AG04450 (cell line): ENCODE measurements at regions of chr21 and their contacts with region 1.

Region 1: DNA sequence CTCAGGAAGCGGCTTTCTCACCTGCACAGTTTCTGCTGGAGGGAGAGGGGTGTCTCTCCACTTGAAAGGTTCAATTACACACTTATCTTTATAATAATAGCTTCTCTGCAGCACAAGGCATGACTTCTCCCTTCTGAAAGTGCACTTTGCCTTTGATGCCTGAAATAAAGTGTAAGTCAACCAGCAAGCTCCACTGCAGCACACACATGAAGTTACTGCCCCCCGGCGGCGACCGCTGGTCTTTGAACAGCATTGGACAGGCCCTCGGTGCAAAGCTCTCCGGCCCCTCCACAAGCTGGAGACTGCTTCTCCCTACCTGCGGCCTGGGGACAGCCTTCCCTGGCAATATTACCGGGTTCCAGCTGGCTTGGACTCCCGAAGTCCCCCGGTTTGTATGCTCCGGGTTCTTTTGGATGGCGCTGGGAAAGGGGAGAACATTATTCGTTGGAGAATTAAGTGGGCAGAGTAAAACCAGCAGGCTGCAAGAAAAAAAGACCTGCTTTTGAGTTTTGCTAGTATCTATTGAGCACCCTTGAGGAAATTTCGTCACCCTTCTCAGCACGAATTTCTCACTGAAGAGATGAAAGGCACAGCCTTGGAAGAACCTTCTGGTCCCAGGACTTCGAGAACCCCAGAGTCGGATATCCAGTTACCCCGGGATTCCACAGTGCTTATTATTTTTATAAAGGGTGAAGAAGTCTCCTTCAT is 11.8 kb downstream of the RCAN1 start:
- DNase-seq: peak; percentile 46
- H3K4me3 ChIP-seq: no peak overlapping the region
- H3K27ac ChIP-seq: no peak overlapping the region
- H3K27me3 ChIP-seq: no peaks in the 10 kb centered on the region
- CTCF ChIP-seq: peak; percentile 84

Region 2: GRCh38 chr21:34046917-34047316 is 556.2 kb before region 1 on chr21:
- CTCF ChIA-PET with region 1: no interaction called
- POLR2A ChIA-PET with region 1: no interaction called
- DNase-seq: no peak
- H3K4me3 ChIP-seq: no peak overlapping the region
- H3K27ac ChIP-seq: no peak overlapping the region
- H3K27me3 ChIP-seq: no peaks in the 10 kb centered on the region
- CTCF ChIP-seq: no peak

Region 3: DNA sequence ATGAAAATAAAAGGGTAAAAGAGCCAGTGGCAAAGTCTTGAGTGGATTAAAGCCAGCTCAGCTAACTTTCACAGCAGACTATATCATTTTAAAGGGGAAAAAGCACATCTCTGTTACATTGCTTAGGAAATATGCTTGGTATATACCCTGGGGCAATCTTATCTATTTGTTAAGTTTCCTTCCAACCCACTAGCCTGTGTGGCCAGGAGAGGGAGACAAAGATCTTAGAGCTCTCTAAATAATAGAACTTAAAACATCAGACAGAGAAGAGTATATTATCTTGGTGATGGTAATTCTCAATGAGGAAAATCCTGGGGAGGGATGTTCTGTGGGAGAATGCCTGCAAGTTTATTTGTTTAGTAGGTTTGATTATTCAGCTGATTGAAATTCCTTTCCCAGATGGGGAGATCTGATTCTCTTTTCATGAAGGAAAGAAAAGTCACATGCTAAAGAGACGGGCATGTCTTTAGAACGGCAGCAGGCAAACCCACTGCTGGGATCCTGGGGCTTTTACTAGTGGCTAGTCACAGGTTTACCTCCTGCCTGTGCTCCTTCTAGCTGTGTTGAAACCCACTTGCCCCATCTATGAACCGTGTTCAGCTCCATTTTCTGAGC is 235.7 kb before region 1 on chr21:
- CTCF ChIA-PET with region 1: interaction called, 23 read pairs
- POLR2A ChIA-PET with region 1: no interaction called
- DNase-seq: peak; percentile 55
- H3K4me3 ChIP-seq: no peak overlapping the region
- H3K27ac ChIP-seq: no peak overlapping the region
- H3K27me3 ChIP-seq: peaks cover 3% of the 10 kb centered on the region
- CTCF ChIP-seq: peak; percentile 90

Region 4: DNA sequence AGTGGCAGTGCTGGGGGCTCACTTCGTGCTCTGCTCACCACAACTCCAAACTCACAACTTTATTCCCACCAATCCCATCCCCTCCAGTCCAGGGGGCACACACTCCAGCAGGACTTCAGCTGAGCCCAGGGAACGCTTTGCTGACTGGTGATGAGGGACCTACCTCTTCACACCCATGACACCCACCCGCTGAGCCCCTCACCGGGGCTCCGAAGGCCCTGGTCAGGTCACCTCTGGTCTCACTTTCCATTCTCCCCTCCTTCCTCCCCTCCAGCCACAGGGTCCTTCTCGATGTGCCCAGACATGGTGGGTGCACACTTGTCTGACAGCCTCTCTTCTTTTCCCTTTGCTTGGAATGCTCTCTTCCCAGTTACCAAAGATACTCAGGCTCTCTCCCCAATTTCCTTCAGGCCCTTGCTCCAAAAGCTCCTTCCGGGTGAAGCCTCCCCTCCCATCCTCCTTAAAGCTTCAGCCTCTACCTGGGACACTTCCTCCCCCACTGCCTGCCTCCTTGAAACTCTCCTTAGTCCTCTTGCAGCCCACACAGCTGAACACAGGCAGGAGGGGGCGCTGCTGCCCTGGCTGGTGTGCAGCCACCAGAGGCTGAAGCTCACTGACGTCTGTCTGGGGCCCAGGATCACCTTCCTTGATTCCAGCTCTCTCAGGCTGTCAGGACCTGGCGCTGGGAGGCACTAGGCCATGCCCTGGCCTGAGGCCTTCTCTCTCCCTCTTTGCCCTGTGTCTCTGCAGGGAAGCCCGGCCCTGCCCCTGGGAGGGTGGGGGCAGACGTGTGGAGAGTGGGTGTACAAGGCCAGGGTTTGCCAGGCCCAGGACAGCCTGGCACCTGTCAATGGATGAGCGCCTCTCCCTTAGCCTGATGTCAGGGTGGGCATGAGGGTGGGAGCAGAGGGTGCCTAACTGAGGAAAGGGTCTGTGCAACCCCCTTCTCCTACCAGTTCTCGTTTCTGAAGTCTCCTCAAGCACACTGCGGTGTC is 92.7 kb before region 1 on chr21:
- CTCF ChIA-PET with region 1: interaction called, 102 read pairs
- POLR2A ChIA-PET with region 1: interaction called, 7 read pairs
- DNase-seq: no peak
- H3K4me3 ChIP-seq: no peak overlapping the region
- H3K27ac ChIP-seq: no peak overlapping the region
- H3K27me3 ChIP-seq: no peaks in the 10 kb centered on the region
- CTCF ChIP-seq: peak; percentile 87

Region 5: DNA sequence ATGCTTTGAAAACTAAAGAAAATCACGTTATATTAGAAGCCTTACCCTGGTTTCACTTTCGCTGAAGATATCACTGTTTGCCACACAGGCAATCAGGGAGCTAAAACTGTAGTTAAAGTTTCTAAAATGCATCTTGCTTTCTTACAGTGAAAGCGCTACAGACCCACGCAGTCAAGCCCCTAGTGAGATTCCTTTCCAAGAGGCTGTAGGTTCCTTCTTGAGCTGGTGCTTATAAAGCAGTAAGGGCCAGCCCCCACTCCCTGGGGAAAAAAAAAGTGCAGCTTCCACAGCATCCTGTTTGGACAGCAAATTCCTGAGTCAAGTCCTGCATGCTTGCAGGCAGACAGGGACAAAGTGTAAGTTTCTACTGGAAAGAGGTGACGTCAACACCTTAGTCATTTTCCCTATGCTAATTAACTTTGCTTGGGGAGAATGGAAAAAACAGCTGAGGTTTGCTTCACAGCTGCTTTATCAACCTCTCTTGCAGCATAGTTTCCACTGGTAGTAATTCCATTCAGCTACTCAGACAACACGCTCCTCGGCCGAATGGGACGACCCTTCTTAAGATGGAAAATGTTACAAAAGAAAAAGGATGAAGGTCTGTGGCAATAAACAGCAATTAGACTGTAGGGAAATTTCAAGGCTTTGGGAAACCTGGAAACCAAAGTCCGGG is 76.4 kb before region 1 on chr21:
- CTCF ChIA-PET with region 1: interaction called, 23 read pairs
- POLR2A ChIA-PET with region 1: interaction called, 9 read pairs
- DNase-seq: peak; percentile 100
- H3K4me3 ChIP-seq: peak overlapping the region; percentile 71
- H3K27ac ChIP-seq: peak overlapping the region; percentile 93
- H3K27me3 ChIP-seq: no peaks in the 10 kb centered on the region
- CTCF ChIP-seq: no peak

Region 6: DNA sequence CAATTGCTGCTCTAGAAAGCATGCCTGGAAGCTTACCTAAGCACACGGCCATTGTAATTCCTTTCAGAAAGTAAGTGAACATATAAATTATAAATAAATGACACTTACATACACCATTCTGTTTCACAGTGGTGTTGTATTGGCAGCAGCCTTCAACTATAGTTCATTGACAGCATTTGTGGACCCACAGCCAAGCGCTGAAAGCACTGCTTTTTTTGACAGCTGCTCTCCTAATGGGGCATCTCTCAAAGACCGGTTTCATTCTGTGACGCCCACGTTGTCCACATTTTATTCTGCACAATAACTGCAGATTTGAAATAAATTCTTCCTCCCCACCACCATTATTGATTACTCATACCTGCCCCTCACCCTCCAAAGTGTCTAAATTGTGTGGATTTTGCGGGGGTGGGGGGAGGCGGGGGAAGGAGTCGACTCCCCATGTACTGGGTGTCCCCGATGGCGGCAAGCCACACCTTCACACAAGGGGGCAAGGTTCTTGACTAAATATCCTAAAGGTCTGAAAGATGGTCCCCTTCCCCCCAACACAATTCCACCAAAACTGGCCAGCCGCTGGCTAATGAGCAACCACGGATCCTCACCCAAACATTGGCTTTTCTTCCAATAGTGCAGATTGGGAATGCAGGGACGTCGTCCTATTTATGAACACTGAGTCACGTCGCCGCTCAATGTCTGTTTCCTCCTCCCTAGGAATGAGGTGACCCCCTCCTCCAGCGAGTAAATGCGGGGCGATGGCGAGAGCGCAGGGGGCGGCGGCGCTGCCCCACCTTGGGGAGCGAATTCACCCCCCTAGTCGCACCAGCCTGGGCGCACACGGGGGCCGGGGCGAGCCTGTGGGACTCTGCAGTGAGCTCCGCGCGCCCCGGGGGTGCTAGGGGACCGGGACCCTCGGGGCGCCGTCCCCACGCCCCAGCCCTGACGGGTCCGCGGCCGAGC is 10.8 kb after region 1 on chr21:
- CTCF ChIA-PET with region 1: interaction called, 28 read pairs
- POLR2A ChIA-PET with region 1: no interaction called
- DNase-seq: no peak
- H3K4me3 ChIP-seq: peak overlapping the region; percentile 70
- H3K27ac ChIP-seq: no peak overlapping the region
- H3K27me3 ChIP-seq: peaks cover 2% of the 10 kb centered on the region
- CTCF ChIP-seq: no peak

Region 7: DNA sequence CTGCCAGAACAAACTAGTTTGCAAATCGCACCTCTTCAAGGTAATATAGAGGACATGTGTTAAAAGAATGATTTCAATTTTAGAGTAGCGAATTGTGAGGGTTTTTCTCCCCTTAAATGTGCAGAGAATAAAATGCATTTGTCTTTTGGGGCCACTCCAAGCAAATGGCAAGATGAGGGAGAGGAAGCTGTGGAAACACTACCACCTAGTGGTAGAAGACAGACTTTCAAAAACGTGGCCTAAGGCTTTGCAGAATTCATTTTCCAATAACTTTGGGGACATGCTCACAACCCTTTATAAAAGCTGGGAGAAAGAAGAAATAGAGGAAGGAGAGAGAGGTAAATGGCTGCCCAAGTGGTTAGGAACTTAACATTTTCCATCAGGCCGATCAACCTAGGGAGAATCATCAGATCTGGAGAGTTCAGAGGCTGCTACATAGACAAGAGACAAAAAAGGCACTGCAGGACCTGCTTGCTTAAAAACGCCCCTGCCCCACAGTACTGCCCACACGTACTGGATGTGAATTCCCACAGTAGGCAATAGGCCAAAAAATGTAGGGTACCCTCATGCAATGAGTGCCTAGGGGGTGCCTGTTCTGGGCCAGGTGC is 27.5 kb after region 1 on chr21:
- CTCF ChIA-PET with region 1: interaction called, 17 read pairs
- POLR2A ChIA-PET with region 1: no interaction called
- DNase-seq: no peak
- H3K4me3 ChIP-seq: no peak overlapping the region
- H3K27ac ChIP-seq: no peak overlapping the region
- H3K27me3 ChIP-seq: peaks cover 39% of the 10 kb centered on the region
- CTCF ChIP-seq: peak; percentile 82